Activated B cell treated with CpG ODN at 0.5 μM for 24 hours (primary cell): ENCODE measurements at regions of chr12 and their contacts with region 1.

Region 1: GRCh38 chr12:56158029-56158925 is at the start of gene MYL6:
- DNase-seq: peak; percentile 70
- ATAC-seq: peak; percentile 86
- H3K4me3 Mint-ChIP-seq: peak within 1 kb of the TSS; percentile 94
- H3K27ac Mint-ChIP-seq: peak within 1 kb of the TSS; percentile 95
- H3K4me1 Mint-ChIP-seq: peaks cover 48% of the 10 kb centered on the region
- H3K27me3 Mint-ChIP-seq: no peaks in the 10 kb centered on the region
- CTCF ChIP-seq: no peak
- total RNA-seq, gene MYL6: 921 and 1,059 TPM in 2 replicates

Region 2: GRCh38 chr12:55973598-55974307 is 184.5 kb before region 1 on chr12 and contains the start of gene RAB5B:
- CTCF ChIA-PET with region 1: interaction called, 3 read pairs
- POLR2A ChIA-PET with region 1: no interaction called
- intact Hi-C with region 1: loop called (anchors 1 kb)
- DNase-seq: peak; percentile 83
- ATAC-seq: peak; percentile 87
- H3K4me3 Mint-ChIP-seq: no peak within 1 kb of the TSS
- H3K27ac Mint-ChIP-seq: no peak within 1 kb of the TSS
- H3K4me1 Mint-ChIP-seq: peaks cover 27% of the 10 kb centered on the region
- H3K27me3 Mint-ChIP-seq: no peaks in the 10 kb centered on the region
- CTCF ChIP-seq: no peak
- total RNA-seq, gene RAB5B: 82.1 and 83.8 TPM in 2 replicates

Region 3: DNA sequence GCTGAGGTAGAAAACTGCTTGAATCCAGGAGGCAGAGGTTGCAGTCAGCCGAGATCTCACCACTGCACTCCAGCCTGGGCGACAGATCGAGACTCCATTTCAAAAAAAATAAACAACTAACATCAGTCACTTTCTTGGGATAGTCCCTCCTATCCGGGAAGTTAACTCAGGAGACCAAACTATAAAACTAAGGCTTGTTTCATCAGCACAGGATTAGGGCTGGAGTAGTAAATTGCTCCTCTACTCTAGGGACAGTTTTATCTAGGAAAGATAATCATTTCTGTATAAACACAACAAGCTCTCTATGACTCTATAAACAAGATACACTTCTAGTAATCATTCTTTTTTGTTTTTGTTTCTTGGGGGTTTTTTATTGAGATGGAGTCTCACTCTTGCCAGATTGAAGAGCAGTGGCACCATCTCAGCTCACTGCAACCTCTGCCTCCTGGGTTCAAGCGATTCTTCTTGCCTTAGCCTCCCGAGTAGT is 104.8 kb before region 1 on chr12:
- CTCF ChIA-PET with region 1: no interaction called
- POLR2A ChIA-PET with region 1: no interaction called
- intact Hi-C with region 1: no loop called
- DNase-seq: no peak
- ATAC-seq: no peak
- H3K4me3 Mint-ChIP-seq: no peak overlapping the region
- H3K27ac Mint-ChIP-seq: no peak overlapping the region
- H3K4me1 Mint-ChIP-seq: no peaks in the 10 kb centered on the region
- H3K27me3 Mint-ChIP-seq: no peaks in the 10 kb centered on the region
- CTCF ChIP-seq: no peak

Region 4: DNA sequence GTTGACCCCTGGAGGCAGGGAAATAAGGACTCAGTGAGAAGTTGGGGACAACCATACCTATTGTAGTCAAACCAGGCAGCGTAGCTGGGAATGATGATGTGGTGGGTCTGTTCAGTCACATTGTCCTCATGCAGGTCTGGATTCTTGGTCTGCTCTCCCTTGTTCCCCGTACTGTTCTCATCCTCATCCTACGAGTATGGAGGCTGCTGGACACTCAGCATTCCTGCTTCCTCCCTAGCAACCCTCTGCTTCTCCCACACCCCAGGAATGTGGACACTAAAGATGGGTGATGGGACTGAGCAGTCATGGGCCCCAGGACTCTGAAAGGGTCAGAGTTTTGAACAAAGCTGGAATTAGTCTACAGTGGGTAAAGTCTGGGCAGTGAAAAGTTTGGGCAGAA is 20.1 kb after region 1 on chr12:
- CTCF ChIA-PET with region 1: no interaction called
- POLR2A ChIA-PET with region 1: interaction called, 6 read pairs
- intact Hi-C with region 1: loop called (anchors 2 kb)
- DNase-seq: no peak
- ATAC-seq: no peak
- H3K4me3 Mint-ChIP-seq: no peak overlapping the region
- H3K27ac Mint-ChIP-seq: no peak overlapping the region
- H3K4me1 Mint-ChIP-seq: no peaks in the 10 kb centered on the region
- H3K27me3 Mint-ChIP-seq: no peaks in the 10 kb centered on the region
- CTCF ChIP-seq: no peak